Lower lobe of right lung (tissue), 2 donors: ENCODE measurements at regions of chr16 and their contacts with region 1.

Region 1: DNA sequence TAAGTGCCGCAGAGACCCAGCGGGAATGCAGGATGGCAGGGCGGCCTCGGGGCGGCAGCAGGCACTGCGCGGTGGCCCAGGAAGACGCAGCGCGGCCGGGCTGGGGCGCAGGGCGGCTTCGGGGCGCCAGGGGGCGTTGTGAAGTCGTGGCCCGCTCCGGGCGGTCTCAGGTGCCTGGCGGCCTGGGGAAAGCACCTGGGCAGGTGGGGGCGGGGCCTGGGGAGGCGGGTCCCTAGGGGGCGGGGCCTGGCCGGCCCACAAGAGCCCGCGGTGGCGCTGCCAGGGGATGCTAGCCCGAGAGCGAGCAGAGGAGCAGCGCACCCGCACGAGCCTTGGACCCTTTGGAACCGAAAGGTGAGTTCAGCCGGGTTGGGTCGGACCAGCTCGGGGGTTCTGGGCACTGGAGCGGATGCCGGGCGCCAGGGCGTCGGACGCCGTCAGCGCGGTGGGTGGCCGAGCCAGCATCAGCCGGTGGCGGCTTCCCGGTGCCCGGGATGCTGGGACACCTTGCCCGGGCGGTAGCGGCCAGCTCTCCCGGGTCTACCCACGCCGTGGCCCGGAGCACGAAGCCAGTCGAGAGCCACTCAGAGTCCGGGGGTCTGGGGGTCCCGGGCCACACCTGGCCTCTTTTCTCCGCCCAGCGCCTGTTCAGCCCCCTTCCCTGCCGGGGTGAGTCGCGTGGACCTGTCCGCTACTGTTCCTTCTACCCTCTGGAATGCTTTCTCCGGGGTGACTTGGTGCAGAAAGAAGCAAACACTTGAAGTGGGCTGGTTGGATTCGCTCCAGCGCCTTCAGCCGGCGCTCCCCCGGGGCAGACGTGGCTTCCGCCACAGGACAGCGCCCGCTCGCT is at the start of gene SCNN1G:
- DNase-seq: peak; percentile 88
- ATAC-seq: peak; percentile 98 to 99
- H3K4me3 ChIP-seq: peak within 1 kb of the TSS; percentile 66
- H3K27ac ChIP-seq: no peak within 1 kb of the TSS
- H3K4me1 ChIP-seq: peaks cover 17% of the 10 kb centered on the region
- H3K27me3 ChIP-seq: peaks cover 28% of the 10 kb centered on the region
- CTCF ChIP-seq: peak; percentile 97
- total RNA-seq, gene SCNN1G: 7.6 TPM

Region 2: DNA sequence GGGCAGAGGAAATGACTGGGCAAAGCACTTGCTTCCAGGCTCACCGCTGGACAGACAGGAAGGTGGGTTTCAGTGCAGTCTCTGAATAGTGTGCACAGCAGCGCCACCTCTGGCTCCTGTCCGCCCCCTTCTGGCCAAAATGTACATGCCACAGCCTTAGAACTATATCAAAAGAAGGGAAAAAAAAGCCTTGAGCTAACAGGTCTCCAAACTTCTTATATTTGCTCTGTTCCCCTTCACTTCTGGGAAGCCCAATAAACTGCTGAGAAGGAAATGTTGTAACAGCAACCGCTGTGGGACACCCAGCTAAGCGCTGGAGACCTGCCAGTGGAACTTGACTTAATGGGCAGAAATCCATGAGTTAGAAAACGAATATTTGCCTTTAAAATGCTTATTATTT is 252.8 kb after region 1 on chr16:
- intact Hi-C with region 1: loop called (anchors 5 kb)
- DNase-seq: peak; percentile 80
- ATAC-seq: peak; percentile 88 to 92
- H3K4me3 ChIP-seq: no peak overlapping the region
- H3K27ac ChIP-seq: no peak overlapping the region
- H3K4me1 ChIP-seq: peaks cover 18% of the 10 kb centered on the region
- H3K27me3 ChIP-seq: no peaks in the 10 kb centered on the region
- CTCF ChIP-seq: peak; percentile 85